A673 (cell line): ENCODE measurements at regions of chr12 and their contacts with region 1.

Region 1: GRCh38 chr12:39237004-39237403 is 205.9 kb downstream of the KIF21A start:
- DNase-seq: no peak
- H3K4me3 ChIP-seq: no peak overlapping the region
- H3K27ac ChIP-seq: no peak overlapping the region
- H3K4me1 ChIP-seq: no peaks in the 10 kb centered on the region
- H3K27me3 ChIP-seq: no peaks in the 10 kb centered on the region
- CTCF ChIP-seq: no peak

Region 2: DNA sequence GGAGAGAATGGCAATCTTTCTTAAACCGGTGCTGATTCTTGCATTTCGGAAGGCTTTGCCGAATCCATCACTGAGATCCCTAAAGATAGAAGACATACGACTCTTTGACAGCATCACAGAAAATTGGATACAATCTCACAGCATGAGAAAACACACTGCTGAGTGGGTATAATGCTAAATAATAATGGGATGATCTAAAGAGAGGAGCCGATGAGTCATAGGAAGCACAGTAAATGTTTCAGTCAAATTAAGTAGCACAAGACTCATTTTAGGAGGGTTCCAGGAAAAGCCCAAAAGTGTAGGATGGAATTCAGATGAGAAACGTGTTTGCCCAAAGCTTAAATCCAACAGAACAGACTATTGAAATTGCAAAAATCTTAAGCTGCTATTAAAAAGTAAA is 413.3 kb before region 1 on chr12:
- CTCF ChIA-PET with region 1: no interaction called
- POLR2A ChIA-PET with region 1: no interaction called
- intact Hi-C with region 1: loop called (anchors 10 kb)
- DNase-seq: peak; percentile 87
- H3K4me3 ChIP-seq: no peak overlapping the region
- H3K27ac ChIP-seq: no peak overlapping the region
- H3K4me1 ChIP-seq: peaks cover 14% of the 10 kb centered on the region
- H3K27me3 ChIP-seq: no peaks in the 10 kb centered on the region
- CTCF ChIP-seq: no peak

Region 3: DNA sequence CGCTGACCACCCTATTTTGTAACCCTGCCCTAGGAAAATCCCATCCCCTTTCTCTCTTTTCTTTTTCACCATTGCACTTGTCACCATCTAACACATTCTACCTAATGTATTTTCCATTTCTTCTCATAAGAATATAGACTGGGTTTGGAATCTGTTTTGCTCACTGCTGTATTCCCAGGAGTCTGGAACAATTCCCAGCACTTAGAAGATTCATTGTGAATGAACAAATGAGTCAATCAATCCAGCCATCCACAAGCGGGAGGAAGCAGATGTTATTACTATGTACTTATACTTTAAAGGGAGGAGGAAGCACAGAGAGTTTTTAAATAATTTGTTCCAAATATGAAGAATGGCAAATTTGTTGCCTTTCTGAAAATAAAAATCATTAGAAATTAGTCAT is 63.8 kb after region 1 on chr12:
- CTCF ChIA-PET with region 1: no interaction called
- POLR2A ChIA-PET with region 1: no interaction called
- intact Hi-C with region 1: loop called (anchors 10 kb)
- DNase-seq: no peak
- H3K4me3 ChIP-seq: no peak overlapping the region
- H3K27ac ChIP-seq: no peak overlapping the region
- H3K4me1 ChIP-seq: no peaks in the 10 kb centered on the region
- H3K27me3 ChIP-seq: no peaks in the 10 kb centered on the region
- CTCF ChIP-seq: no peak

Region 4: GRCh38 chr12:39476118-39476517 is 239.1 kb after region 1 on chr12:
- CTCF ChIA-PET with region 1: no interaction called
- POLR2A ChIA-PET with region 1: no interaction called
- intact Hi-C with region 1: no loop called
- DNase-seq: no peak
- H3K4me3 ChIP-seq: no peak overlapping the region
- H3K27ac ChIP-seq: no peak overlapping the region
- H3K4me1 ChIP-seq: no peaks in the 10 kb centered on the region
- H3K27me3 ChIP-seq: no peaks in the 10 kb centered on the region
- CTCF ChIP-seq: no peak